ENCODE measurements at regions of chr6 and their contacts with region 1.

Region 1: DNA sequence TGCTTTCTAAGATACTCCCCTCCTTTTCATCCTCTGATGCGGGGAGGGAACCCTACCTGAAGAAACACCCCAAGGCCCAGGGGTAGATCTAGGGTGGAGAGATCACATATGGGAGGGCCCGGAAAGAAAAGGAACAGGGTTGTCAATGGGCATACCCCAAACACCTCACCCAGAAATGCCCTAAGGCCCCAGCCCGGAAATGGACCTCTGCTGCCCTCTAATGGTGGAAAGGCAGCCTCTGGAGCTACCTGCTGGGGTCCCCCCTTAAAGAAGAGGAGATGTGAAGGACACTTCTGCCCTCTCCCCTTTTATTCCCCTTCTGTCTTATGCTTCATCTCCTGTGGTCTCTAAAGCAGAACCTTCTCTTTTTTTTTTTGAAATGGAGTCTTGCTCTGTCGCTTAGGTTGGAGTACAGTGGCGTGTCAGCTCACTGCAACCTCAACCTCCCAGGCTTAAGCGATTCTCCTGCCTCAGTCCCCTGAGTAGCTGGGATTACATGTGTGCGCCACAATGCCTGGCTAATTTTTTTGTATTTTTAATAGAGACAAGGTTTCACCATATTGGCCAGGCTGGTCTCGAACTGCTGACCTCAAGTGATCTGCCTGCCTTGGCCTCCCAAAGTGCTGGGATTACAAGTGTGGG is 458 bp upstream of the ARMC12 start:
- DNase-seq: peak; percentile 39 to 65
- ATAC-seq: peak; percentile 47 to 71; a peak in 4 of 6 replicates
- H3K4me3 ChIP-seq: no peak overlapping the region
- H3K27ac ChIP-seq: peak overlapping the region in 1 of 2 experiments; percentile 99; a peak in 1 of 6 replicates
- H3K4me1 ChIP-seq: peaks cover 12% of the 10 kb centered on the region
- CTCF ChIP-seq: peak; percentile 79
- EP300 ChIP-seq: no peak
- POLR2A ChIP-seq: no peak
- RAD21 ChIP-seq: peak; percentile 84 to 91

Region 2: DNA sequence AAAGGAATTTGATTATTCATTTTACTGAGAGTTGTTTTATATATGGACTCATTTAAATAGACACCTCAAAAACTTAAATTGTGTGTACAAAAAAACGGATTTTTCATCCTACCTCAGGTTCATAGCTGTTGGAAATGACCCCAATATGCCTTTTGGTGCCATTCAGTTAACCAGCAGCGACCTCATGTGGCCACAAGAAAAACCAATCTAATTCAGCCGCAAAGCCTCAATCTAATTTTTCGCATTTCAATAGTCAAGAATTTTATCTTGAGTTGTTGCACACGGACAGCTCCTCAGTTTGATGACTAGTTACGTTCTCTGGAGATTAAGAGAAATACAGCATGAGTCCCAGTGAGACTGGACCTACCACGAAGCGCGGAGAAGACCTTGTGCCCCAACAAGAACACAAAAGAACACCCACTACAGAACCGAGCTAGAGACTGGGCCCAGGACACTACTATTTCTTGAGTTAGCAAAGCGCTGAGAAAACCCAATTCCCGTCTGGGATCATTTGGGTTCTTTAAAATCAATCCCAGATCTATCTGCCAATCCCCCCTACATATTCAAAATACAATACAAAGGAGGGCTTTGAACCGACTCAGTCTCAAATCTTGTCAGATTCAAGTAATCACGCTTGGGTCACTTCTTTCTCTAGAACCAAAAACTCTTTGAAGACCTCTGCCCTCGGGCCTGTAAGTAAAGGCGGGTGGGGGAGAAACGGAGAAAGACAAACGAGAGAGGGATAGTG is 596.3 kb before region 1 on chr6:
- CTCF ChIA-PET with region 1: no interaction called
- POLR2A ChIA-PET with region 1: no interaction called
- DNase-seq: peak; percentile 18 to 67
- ATAC-seq: peak; percentile 24 to 60; a peak in 2 of 6 replicates
- H3K4me3 ChIP-seq: no peak overlapping the region
- H3K27ac ChIP-seq: no peak overlapping the region
- H3K4me1 ChIP-seq: peaks cover 4% of the 10 kb centered on the region; the same call in 2 of the 3 replicates
- CTCF ChIP-seq: peak; percentile 83
- EP300 ChIP-seq: no peak
- POLR2A ChIP-seq: no peak
- RAD21 ChIP-seq: peak; percentile 93

Region 3: DNA sequence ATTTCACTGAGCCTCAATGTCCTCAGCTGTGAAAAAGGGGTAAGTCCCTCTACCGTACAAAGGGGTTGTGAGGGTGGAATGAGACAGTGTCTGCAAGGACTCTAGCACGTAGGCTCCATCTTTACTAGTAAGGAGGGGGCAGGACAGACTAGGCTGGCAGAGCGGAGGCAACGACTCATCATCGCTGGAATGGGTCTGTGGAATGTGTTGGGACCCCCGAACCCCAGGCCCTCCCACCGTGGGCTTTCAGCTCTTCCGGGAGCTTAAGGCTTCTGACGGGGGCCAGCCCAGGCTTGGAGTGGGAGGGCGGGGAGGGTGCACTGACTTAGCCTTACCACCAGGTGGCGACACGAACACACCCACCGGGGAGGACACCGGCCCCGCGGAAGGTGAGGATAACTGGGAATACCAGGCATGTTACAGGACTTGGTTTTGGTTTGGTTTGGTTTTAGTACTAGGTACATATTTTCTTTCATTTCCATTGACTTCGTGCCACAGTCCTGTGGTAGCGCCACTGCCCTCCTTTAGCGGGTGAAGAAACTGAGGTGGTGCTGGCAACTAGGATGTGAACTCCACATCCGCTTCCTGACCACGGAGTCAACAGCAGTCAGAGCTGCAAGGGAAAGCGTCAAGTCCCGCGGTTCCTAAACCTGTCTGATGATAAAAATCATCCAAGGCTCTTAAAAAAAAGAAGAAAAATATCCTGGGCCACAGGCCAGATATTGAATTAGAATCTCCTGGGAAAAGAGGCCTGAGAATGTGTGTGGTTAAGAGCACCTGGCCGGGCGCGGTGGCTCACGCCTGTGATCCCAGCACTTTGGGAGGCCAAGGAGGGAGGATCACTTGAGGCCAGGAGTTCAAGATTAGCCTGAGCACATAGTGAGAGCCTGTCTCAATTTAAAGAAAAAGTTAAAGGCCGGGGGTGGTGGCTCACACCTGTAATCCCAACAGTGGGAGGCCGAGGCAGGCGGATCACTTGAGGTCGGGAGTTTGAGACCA is 213.4 kb before region 1 on chr6:
- CTCF ChIA-PET with region 1: interaction called, 67 read pairs
- POLR2A ChIA-PET with region 1: no interaction called
- DNase-seq: peak; percentile 55 to 65
- ATAC-seq: peak; percentile 93 to 96
- H3K4me3 ChIP-seq: no peak overlapping the region
- H3K27ac ChIP-seq: no peak overlapping the region
- H3K4me1 ChIP-seq: no peaks in the 10 kb centered on the region
- CTCF ChIP-seq: peak; percentile 78
- EP300 ChIP-seq: no peak
- POLR2A ChIP-seq: no peak
- RAD21 ChIP-seq: peak; percentile 84

Region 4: GRCh38 chr6:35583893-35584688 is 152.3 kb before region 1 on chr6:
- CTCF ChIA-PET with region 1: interaction called, 129 read pairs
- POLR2A ChIA-PET with region 1: no interaction called
- DNase-seq: peak in 1 of 2 experiments; percentile 67
- ATAC-seq: peak; percentile 64 to 77; a peak in 5 of 6 replicates
- H3K4me3 ChIP-seq: no peak overlapping the region
- H3K27ac ChIP-seq: peak overlapping the region in 1 of 2 experiments; percentile 43; a peak in 1 of 6 replicates
- H3K4me1 ChIP-seq: no peaks in the 10 kb centered on the region
- CTCF ChIP-seq: peak; percentile 85
- EP300 ChIP-seq: no peak
- POLR2A ChIP-seq: no peak
- RAD21 ChIP-seq: peak; percentile 89 to 93

Region 5: DNA sequence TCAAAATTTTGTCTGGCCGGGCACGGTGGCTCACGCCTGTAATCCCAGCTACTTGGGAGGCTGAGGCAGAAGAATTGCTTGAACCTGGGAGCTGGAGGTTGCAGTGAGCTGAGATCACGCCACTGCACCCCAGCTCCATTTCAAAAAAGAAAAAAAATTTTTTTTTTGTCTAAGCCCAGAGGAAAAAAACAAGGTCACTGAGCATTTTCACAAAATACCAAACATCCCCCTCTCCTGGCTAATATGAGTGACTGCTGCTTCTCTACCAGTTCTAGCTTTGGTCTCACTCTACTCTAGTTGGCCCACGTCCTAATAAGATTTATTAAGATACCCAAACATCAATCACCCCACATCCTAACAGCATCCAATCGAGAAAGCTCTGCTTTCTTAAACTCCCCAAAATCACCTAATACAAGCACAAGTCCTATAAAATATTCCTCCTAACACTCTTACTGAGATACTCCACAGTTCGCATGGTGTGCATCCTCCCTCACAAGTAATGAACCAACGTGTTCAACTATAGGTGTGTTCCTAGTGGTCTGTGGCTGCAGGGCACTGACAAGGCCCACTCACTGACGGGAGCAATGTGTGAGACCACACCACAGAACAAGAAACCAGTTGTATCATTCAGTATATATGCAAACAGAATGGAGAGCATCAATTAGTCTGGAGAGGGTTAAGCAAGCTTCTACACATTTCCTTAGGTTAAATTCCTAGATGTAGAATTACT is 111.9 kb before region 1 on chr6:
- CTCF ChIA-PET with region 1: interaction called, 12 read pairs
- POLR2A ChIA-PET with region 1: no interaction called
- DNase-seq: peak in 1 of 2 experiments; percentile 20
- ATAC-seq: peak in 1 of 2 experiments; percentile 60; a peak in 3 of 6 replicates
- H3K4me3 ChIP-seq: no peak overlapping the region
- H3K27ac ChIP-seq: no peak overlapping the region
- H3K4me1 ChIP-seq: no peaks in the 10 kb centered on the region
- CTCF ChIP-seq: peak; percentile 30; the same call in 2 of the 3 replicates
- EP300 ChIP-seq: no peak
- POLR2A ChIP-seq: no peak
- RAD21 ChIP-seq: no peak

Region 6: DNA sequence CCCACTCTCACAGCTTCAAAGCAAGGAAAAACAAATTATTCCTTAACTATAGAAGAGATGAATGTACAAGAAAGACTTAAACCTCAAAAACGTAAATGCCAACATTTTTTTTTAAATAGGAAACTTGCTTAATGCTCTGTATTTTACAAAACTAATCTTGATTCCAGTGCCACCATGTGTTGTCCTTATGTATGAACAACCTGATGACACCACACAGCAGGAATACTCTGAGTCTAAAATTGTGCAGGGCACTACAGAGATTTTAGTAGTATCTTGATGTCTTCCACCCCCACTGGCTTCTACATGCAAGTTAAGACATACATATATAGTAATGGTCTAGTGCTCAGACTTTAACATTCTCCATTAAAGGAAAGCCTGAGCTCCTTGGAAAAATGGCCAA is 138.4 kb after region 1 on chr6:
- CTCF ChIA-PET with region 1: no interaction called
- POLR2A ChIA-PET with region 1: no interaction called
- DNase-seq: no peak
- ATAC-seq: no peak
- H3K4me3 ChIP-seq: no peak overlapping the region
- H3K27ac ChIP-seq: no peak overlapping the region
- H3K4me1 ChIP-seq: no peaks in the 10 kb centered on the region
- CTCF ChIP-seq: no peak
- EP300 ChIP-seq: no peak
- POLR2A ChIP-seq: no peak
- RAD21 ChIP-seq: no peak

Region 7: GRCh38 chr6:36139429-36139828 is 403.1 kb after region 1 on chr6:
- CTCF ChIA-PET with region 1: no interaction called
- POLR2A ChIA-PET with region 1: no interaction called
- DNase-seq: no peak
- ATAC-seq: peak in 1 of 2 experiments; percentile 74; a peak in 3 of 6 replicates
- H3K4me3 ChIP-seq: no peak overlapping the region
- H3K27ac ChIP-seq: no peak overlapping the region
- H3K4me1 ChIP-seq: no peaks in the 10 kb centered on the region
- CTCF ChIP-seq: no peak
- EP300 ChIP-seq: no peak
- POLR2A ChIP-seq: no peak
- RAD21 ChIP-seq: peak in 1 of 2 experiments; percentile 35; a peak in 2 of 5 replicates